ENCODE measurements at regions of chr15 and their contacts with region 1.

Region 1: GRCh38 chr15:48221885-48222284 is 15.8 kb downstream of the SLC12A1 start:
- DNase-seq: peak in 1 of 2 donors; percentile 88
- H3K4me3 ChIP-seq: peak overlapping the region in 1 of 2 donors; percentile 35
- H3K27ac ChIP-seq: peak overlapping the region; percentile 79 to 87
- H3K4me1 ChIP-seq: peaks cover 3 to 40% of the 10 kb centered on the region in 2 donors
- H3K27me3 ChIP-seq: no peaks in the 10 kb centered on the region
- CTCF ChIP-seq: no peak

Region 2: GRCh38 chr15:47473832-47474231 is 748.1 kb before region 1 on chr15:
- intact Hi-C with region 1: loop called (anchors 10 kb)
- DNase-seq: peak; percentile 16 to 87
- H3K4me3 ChIP-seq: peak overlapping the region in 1 of 2 donors; percentile 11
- H3K27ac ChIP-seq: peak overlapping the region; percentile 66 to 72
- H3K4me1 ChIP-seq: peaks cover 5 to 22% of the 10 kb centered on the region in 2 donors
- H3K27me3 ChIP-seq: no peaks in the 10 kb centered on the region
- CTCF ChIP-seq: no peak

Region 3: DNA sequence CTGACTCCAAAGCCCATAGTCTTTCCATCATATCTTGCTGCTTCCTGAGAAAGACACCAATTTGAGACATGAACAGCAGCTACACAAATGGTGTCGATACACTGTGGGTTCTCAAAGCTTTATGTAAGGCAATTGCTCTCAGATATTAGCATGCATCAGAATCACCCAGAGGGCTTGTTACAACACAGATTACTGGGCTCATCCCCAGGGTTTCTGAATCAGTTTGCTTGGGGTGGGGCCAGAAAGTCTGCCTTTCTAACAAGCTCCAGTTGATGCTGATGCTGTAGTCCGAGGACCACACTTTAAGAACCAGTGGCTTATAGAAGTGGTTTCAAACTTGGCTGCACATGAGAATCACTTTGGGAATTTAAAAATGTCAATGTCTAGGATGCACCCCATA is 418.1 kb before region 1 on chr15:
- intact Hi-C with region 1: no loop called
- DNase-seq: no peak
- H3K4me3 ChIP-seq: no peak overlapping the region
- H3K27ac ChIP-seq: no peak overlapping the region
- H3K4me1 ChIP-seq: no peaks in the 10 kb centered on the region
- H3K27me3 ChIP-seq: no peaks in the 10 kb centered on the region
- CTCF ChIP-seq: no peak

Region 4: GRCh38 chr15:48062148-48062861 is 159.6 kb before region 1 on chr15:
- intact Hi-C with region 1: loop called (anchors 2 kb)
- DNase-seq: no peak
- H3K4me3 ChIP-seq: no peak overlapping the region
- H3K27ac ChIP-seq: no peak overlapping the region
- H3K4me1 ChIP-seq: peaks cover 4 to 16% of the 10 kb centered on the region in 2 donors
- H3K27me3 ChIP-seq: no peaks in the 10 kb centered on the region
- CTCF ChIP-seq: no peak

Region 5: GRCh38 chr15:48144889-48145288 is 77.0 kb before region 1 on chr15:
- intact Hi-C with region 1: loop called (anchors 5 kb)
- DNase-seq: no peak
- H3K4me3 ChIP-seq: peak overlapping the region; percentile 9 to 23
- H3K27ac ChIP-seq: peak overlapping the region; percentile 70 to 76
- H3K4me1 ChIP-seq: peaks cover 0 to 28% of the 10 kb centered on the region in 2 donors
- H3K27me3 ChIP-seq: no peaks in the 10 kb centered on the region
- CTCF ChIP-seq: no peak

Region 6: GRCh38 chr15:48177766-48178647 is 43.9 kb before region 1 on chr15 and contains the start of gene MYEF2:
- intact Hi-C with region 1: loop called (anchors 2 kb)
- DNase-seq: peak; percentile 15 to 84
- H3K4me3 ChIP-seq: peak within 1 kb of the TSS; percentile 63 to 80
- H3K27ac ChIP-seq: peak within 1 kb of the TSS; percentile 92 to 96
- H3K4me1 ChIP-seq: peaks cover 0 to 6% of the 10 kb centered on the region in 2 donors
- H3K27me3 ChIP-seq: no peaks in the 10 kb centered on the region
- CTCF ChIP-seq: no peak
- total RNA-seq, gene MYEF2: 13.6 TPM

Region 7: GRCh38 chr15:48336940-48337339 is 115.1 kb after region 1 on chr15:
- intact Hi-C with region 1: no loop called
- DNase-seq: no peak
- H3K4me3 ChIP-seq: no peak overlapping the region
- H3K27ac ChIP-seq: no peak overlapping the region
- H3K4me1 ChIP-seq: peaks cover 4 to 7% of the 10 kb centered on the region in 2 donors
- H3K27me3 ChIP-seq: no peaks in the 10 kb centered on the region
- CTCF ChIP-seq: peak in 1 of 3 experiments; percentile 28

Region 8: GRCh38 chr15:48507416-48508065 is 285.7 kb after region 1 on chr15:
- intact Hi-C with region 1: no loop called
- DNase-seq: no peak
- H3K4me3 ChIP-seq: no peak overlapping the region
- H3K27ac ChIP-seq: no peak overlapping the region
- H3K4me1 ChIP-seq: peaks cover 0 to 6% of the 10 kb centered on the region in 2 donors
- H3K27me3 ChIP-seq: no peaks in the 10 kb centered on the region
- CTCF ChIP-seq: peak; percentile 32 to 61 (median 54)

Measured in ascending aorta (tissue), 2 donors.